GM13976 (cell line): ENCODE measurements at regions of chr17 and their contacts with region 1.

Region 1: DNA sequence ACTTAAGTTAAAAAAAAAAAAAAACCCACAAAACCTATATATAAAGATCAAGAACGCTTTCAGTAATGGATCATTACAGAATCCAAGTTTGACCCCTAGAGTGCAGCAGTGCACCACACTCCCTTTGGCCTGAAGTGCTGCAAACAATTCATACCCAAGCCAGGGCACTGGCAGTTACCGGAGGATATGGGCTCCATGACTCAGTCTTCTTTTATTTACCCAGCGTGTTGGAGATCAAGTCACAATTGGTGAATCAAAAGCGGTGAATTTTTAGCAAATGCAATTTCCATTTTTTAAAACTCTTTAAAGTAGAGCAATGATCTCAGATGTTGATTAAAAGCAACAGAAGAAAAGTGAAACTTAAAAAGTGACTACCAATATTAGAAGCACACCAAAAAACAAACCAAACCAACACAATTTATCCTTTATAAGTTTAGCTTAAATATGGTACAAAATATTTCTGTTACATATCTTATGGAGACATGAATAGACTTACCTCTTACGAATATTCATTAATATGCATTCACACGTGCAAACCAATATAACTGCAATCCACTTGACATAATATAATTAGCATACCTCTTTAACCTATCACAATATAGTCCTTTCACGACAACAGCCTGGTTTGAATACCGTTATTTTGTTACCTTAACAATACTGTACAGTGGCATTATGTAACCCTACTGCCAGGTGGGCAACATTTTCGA is 46.3 kb downstream of the ZNF652 start:
- DNase-seq: peak; percentile 77
- CTCF ChIP-seq: peak; percentile 47

Region 2: DNA sequence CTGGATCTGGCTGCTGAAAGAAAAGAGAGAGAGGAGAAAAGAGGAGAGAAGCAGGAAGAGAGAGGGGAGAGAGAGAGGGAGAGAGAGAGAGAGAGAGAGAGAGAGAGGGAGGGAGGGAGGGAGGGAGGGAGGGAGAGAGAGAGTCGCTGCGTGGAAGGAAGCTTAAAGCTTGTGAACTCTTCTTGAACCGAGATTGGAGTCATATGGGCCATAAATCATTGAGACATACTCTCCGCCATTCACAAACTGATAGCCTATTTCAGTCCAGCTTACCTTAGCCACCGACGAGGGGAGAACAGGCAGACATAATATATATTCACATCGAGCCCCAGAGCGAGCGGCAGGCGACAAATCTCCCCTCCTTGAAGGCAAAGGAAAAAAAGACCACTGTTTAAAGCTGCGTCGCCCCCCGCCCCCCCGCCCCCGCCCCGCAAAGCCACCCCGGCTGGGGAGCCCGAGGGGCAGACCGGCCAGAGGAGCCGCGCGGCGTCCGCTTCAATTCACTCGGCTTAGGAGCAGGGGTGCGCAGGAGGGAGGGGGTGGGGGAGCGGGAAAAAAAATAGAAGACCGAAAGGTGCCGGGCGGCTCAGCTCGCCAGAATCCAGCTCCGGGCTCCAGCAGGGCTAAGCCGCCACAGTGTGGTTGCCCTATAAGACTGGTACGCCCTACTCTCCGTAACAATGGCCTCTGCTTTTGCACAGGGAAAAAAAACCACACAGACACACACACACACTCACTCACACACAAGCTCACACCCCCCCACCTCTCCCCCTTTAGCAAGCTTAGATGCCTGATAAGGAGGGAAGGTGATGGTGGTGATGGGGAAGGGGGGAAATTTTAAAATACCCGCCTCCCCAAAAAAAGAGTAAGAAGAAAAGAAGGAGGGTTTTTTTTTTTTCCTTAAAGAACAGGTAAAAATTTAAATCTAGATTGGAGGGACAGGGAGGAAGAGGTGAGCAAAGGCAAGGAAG is 760.2 kb before region 1 on chr17:
- in situ Hi-C with region 1: no loop called
- DNase-seq: peak; percentile 58
- CTCF ChIP-seq: no peak

Region 3: GRCh38 chr17:49399995-49400394 is 84.3 kb after region 1 on chr17:
- in situ Hi-C with region 1: loop called (anchors 5 kb)
- DNase-seq: no peak
- CTCF ChIP-seq: no peak

Region 4: GRCh38 chr17:49434821-49435670 is 119.3 kb after region 1 on chr17:
- in situ Hi-C with region 1: no loop called
- DNase-seq: peak; percentile 84
- CTCF ChIP-seq: peak; percentile 55

Region 5: DNA sequence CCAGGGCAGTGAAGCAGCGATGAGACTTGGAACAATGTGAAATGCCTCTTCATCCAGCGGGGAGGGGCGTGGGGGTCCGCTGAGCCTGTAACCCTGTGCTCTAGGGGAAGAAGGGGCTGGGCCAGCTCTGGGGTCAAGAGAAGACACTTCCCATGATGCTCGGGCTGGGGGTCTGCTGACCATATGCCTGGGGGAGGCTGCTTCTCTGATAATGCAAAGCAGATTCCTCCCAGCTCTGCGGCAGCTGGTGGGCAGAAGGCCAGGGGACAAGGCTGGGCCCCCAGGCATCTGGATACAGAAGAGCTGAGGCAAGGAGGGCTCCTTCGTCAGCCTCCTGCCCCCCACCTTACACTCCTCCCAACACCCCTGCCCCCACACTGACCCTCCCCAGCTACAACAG is 204.1 kb after region 1 on chr17:
- in situ Hi-C with region 1: no loop called
- DNase-seq: no peak
- CTCF ChIP-seq: no peak

Region 6: GRCh38 chr17:49548506-49549310 is 233.0 kb after region 1 on chr17:
- in situ Hi-C with region 1: loop called (anchors 25 kb)
- DNase-seq: peak; percentile 76
- CTCF ChIP-seq: peak; percentile 55